Cardiac septum (tissue), 1 donor: ENCODE measurements at regions of chr15 and their contacts with region 1.

Region 1: GRCh38 chr15:76190834-76191538 is 120.3 kb downstream of the ETFA start:
- DNase-seq: peak; percentile 86

Region 2: DNA sequence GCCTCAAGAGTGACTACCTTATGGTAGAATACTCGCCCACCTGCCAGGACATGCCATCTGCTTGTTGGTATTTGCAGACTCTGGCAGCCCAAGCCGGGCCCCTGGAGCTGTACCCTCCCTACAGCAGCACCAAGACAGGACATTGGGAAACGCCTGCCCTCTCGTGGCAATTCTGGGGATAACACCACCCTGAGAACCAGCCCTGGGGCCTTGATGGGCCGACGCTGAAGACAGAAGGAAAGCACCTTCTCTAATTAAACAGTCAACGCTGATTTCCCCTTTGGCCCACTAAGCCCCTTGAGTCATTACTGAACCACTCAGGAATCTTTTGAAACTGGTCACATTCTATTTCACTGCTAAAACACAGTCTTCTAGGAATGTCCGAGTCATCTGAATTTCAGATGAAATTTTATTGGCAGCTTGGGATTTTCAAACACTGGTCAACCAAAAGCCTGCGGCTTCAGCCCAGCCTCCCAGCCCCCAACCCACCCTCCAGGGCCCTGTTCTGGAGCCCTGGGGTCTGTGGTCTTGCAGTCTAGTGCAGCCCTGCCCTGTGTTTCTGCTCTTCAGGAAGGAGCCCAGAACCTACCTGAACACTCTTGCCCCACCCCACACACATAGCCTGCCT is 39.9 kb before region 1 on chr15:
- intact Hi-C with region 1: no loop called
- DNase-seq: peak; percentile 87

Region 3: GRCh38 chr15:76203346-76204108 is 12.5 kb after region 1 on chr15:
- intact Hi-C with region 1: loop called (anchors 1 kb)
- DNase-seq: no peak

Region 4: GRCh38 chr15:76234337-76234889 is 43.4 kb after region 1 on chr15:
- intact Hi-C with region 1: loop called (anchors 5 kb)
- DNase-seq: no peak

Region 5: DNA sequence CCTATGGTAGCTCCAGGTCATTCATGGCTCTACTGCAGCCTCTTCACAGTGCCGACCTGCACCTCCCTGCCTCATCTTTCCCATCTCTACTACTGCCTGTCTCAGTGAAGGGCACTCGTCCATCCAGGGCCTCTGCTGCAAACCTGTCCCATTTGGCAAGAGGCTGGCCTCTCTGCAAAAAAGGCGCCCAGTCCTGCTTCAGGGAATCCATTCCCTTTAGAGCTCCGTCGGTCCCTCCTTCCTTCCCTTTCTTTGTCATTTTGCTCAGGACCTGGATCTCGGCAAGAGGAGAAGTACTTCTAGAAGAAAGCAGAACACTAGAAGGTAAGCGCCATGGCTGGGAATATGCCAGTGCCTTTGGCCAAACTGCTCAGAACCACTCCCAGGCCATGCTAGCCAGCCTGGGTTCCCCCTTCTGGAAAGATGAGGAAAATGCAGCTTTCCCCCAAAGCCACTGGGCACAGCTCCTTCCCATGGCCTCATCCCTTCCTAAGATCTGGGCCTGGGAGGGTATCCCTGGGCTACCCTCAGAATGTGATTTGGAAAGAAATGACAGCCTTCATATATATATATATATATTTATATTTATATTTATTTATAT is 139.2 kb after region 1 on chr15:
- intact Hi-C with region 1: loop called (anchors 2 kb)
- DNase-seq: no peak

Region 6: DNA sequence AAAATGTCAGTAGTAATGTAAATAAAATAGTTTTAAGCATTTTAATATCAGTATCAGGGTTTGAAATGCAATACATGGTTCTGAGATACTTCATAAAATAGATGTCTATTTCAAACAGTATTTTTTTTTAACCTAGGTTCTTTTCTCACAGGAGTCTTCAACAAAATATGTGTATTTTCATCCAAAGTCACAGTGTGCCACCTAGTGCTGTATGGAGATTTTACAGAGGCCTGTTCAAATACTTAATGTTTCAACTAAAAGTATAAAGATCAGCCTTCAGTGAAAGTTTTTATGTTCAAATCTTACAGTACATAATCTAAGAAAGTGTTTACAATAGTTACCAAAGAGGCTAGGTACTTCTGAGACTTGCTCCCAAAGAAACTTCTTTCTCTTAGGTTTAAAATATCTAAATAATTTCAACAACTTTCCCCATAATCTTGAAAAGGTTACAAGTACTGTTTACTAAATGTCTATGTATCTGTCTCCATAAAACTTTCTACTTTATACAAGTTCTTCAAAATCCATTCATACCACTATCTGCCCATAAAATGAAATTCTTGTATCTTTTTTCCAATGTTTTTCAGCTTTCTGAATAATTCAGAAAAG is 675.8 kb after region 1 on chr15:
- intact Hi-C with region 1: loop called (anchors 10 kb)
- DNase-seq: no peak